Aorta (tissue), 5 donors: ENCODE measurements at regions of chr13 and their contacts with region 1.

Region 1: GRCh38 chr13:31797154-31797775 is 57.9 kb downstream of the RXFP2 start:
- DNase-seq: no peak
- ATAC-seq: no peak
- H3K4me3 ChIP-seq: no peak overlapping the region
- H3K27ac ChIP-seq: no peak overlapping the region
- H3K4me1 ChIP-seq: no peaks in the 10 kb centered on the region
- H3K27me3 ChIP-seq: no peaks in the 10 kb centered on the region

Region 2: DNA sequence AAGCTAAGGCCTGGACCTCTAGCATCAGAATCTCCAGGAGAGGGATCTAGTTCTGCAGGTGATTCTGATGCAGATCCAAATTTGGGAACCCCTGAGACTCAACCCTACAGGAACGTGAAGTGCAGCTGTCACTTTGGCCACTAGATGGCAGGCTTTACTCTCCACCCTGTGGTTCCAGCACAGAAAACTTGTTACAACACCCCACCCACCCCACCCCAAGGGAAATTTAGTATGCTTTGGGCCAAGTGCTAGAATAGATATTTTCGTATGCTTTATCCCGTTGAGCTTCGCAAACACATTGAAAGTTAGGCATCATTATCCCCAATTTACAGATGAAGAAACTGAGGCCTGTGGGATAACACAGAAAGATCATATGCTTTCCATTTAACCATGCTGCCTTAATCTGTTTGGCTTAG is 365.5 kb before region 1 on chr13:
- intact Hi-C with region 1: loop called (anchors 2 to 5 kb)
- DNase-seq: peak in 1 of 2 donors; percentile 56
- ATAC-seq: no peak
- H3K4me3 ChIP-seq: no peak overlapping the region
- H3K27ac ChIP-seq: no peak overlapping the region
- H3K4me1 ChIP-seq: no peaks in the 10 kb centered on the region
- H3K27me3 ChIP-seq: no peaks in the 10 kb centered on the region

Region 3: GRCh38 chr13:31538067-31539042 is 258.9 kb before region 1 on chr13:
- intact Hi-C with region 1: loop called (anchors 5 to 10 kb)
- DNase-seq: no peak
- ATAC-seq: no peak
- H3K4me3 ChIP-seq: no peak overlapping the region
- H3K27ac ChIP-seq: no peak overlapping the region
- H3K4me1 ChIP-seq: no peaks in the 10 kb centered on the region
- H3K27me3 ChIP-seq: no peaks in the 10 kb centered on the region

Region 4: GRCh38 chr13:31742097-31742734 is 55.0 kb before region 1 on chr13:
- intact Hi-C with region 1: loop called in 1 of 2 experiments (anchors 5 kb)
- DNase-seq: peak; percentile 65 to 77
- ATAC-seq: peak; percentile 84
- H3K4me3 ChIP-seq: no peak overlapping the region
- H3K27ac ChIP-seq: no peak overlapping the region
- H3K4me1 ChIP-seq: no peaks in the 10 kb centered on the region
- H3K27me3 ChIP-seq: no peaks in the 10 kb centered on the region

Region 5: GRCh38 chr13:31756346-31756745 is 40.9 kb before region 1 on chr13:
- intact Hi-C with region 1: loop called in 1 of 2 experiments (anchors 5 kb)
- DNase-seq: no peak
- ATAC-seq: peak; percentile 39
- H3K4me3 ChIP-seq: no peak overlapping the region
- H3K27ac ChIP-seq: no peak overlapping the region
- H3K4me1 ChIP-seq: no peaks in the 10 kb centered on the region
- H3K27me3 ChIP-seq: no peaks in the 10 kb centered on the region

Region 6: DNA sequence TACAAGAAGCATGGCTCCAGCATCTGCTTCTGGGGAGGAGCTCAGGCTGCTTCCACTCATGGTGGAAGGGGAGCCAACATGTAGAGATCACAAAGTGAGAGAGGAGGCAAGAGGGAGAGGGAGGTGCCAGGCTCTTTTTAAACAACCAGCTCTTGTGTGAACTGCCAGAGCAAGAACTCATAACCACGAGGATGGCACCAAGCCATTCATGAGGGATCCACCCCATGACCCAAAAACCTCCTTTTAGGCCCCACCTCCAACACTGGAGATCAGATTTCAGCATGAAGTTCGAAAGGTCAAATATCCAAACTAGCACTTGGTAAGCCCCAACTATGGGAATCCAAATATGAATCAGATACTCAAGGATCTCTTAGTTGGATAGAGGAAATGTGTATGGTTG is 73.2 kb after region 1 on chr13:
- intact Hi-C with region 1: no loop called
- DNase-seq: no peak
- ATAC-seq: no peak
- H3K4me3 ChIP-seq: no peak overlapping the region
- H3K27ac ChIP-seq: no peak overlapping the region
- H3K4me1 ChIP-seq: peaks cover 2 to 3% of the 10 kb centered on the region in 2 donors
- H3K27me3 ChIP-seq: no peaks in the 10 kb centered on the region

Region 7: GRCh38 chr13:32001185-32001768 is 204.0 kb after region 1 on chr13:
- intact Hi-C with region 1: no loop called
- DNase-seq: no peak
- ATAC-seq: peak; percentile 83
- H3K4me3 ChIP-seq: no peak overlapping the region
- H3K27ac ChIP-seq: no peak overlapping the region
- H3K4me1 ChIP-seq: peaks cover 0 to 7% of the 10 kb centered on the region in 2 donors
- H3K27me3 ChIP-seq: no peaks in the 10 kb centered on the region

Region 8: DNA sequence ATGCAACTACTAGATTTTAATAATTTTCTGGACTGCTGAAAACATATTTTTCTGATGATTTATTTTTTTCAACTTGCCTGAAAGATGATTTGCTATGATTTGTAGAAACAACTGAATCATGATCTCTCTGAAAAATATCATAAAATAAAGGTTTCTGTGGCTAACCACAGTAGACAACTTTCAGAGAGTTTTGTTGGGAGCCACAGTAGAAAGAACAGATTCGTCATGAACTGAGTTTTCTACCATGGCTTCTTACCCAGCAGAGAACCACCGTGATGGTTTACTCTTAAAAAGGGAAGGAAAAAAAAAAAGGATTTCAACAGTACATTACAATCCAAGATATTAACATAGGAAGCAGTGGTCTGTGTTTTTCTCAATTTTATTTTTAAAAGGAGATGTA is 499.9 kb after region 1 on chr13:
- intact Hi-C with region 1: no loop called
- DNase-seq: no peak
- ATAC-seq: no peak
- H3K4me3 ChIP-seq: no peak overlapping the region
- H3K27ac ChIP-seq: no peak overlapping the region
- H3K4me1 ChIP-seq: no peaks in the 10 kb centered on the region
- H3K27me3 ChIP-seq: no peaks in the 10 kb centered on the region